ENCODE measurements at regions of chr5 and their contacts with region 1.

Region 1: DNA sequence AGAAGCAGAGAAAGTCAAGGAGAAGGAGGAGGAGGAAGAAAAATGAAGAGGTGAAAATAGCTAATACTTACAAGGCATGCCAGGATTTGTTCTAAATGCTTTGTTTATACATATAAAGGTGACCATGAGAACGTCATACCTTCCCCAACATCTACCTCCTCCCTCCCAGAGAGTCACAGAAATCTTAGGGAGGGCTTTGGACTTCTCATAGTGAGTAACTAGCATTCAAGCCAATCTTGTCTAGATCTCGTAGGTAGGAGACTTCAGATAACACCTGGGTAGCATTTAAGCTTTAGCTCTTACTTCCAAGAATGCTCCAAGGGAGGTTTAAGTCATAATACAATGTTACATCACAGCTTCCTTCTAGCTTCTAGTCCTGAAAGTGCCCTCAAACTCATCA is 36.5 kb upstream of the GPBP1 start:
- DNase-seq: no peak
- H3K4me3 ChIP-seq: no peak overlapping the region
- H3K27ac ChIP-seq: no peak overlapping the region
- H3K4me1 ChIP-seq: no peaks in the 10 kb centered on the region
- H3K27me3 ChIP-seq: no peaks in the 10 kb centered on the region
- CTCF ChIP-seq: no peak

Region 2: GRCh38 chr5:56900858-56901578 is 236.4 kb before region 1 on chr5:
- CTCF ChIA-PET with region 1: interaction called, 6 read pairs
- POLR2A ChIA-PET with region 1: no interaction called
- intact Hi-C with region 1: loop called (anchors 1 kb)
- DNase-seq: peak in 1 of 2 experiments; percentile 31
- H3K4me3 ChIP-seq: no peak overlapping the region
- H3K27ac ChIP-seq: no peak overlapping the region
- H3K4me1 ChIP-seq: 0 out of 2 replicates have a peak, but pooled peaks cover 4% of the 10 kb centered on the region
- H3K27me3 ChIP-seq: no peaks in the 10 kb centered on the region
- CTCF ChIP-seq: peak; percentile 79

Region 3: GRCh38 chr5:57221049-57221568 is 83.7 kb after region 1 on chr5:
- CTCF ChIA-PET with region 1: interaction called, 3 read pairs
- POLR2A ChIA-PET with region 1: no interaction called
- intact Hi-C with region 1: loop called (anchors 1 kb)
- DNase-seq: peak in 1 of 2 experiments; percentile 59
- H3K4me3 ChIP-seq: no peak overlapping the region
- H3K27ac ChIP-seq: peak overlapping the region; percentile 38; the same call in 1 of the 2 replicates
- H3K4me1 ChIP-seq: peaks cover 32% of the 10 kb centered on the region
- H3K27me3 ChIP-seq: no peaks in the 10 kb centered on the region
- CTCF ChIP-seq: peak; percentile 91

Region 4: GRCh38 chr5:57259704-57260103 is 122.3 kb after region 1 on chr5:
- CTCF ChIA-PET with region 1: no interaction called
- POLR2A ChIA-PET with region 1: no interaction called
- intact Hi-C with region 1: no loop called
- DNase-seq: no peak
- H3K4me3 ChIP-seq: no peak overlapping the region
- H3K27ac ChIP-seq: no peak overlapping the region
- H3K4me1 ChIP-seq: no peaks in the 10 kb centered on the region
- H3K27me3 ChIP-seq: no peaks in the 10 kb centered on the region
- CTCF ChIP-seq: no peak

Region 5: GRCh38 chr5:57416249-57416994 is 279.0 kb after region 1 on chr5:
- CTCF ChIA-PET with region 1: no interaction called
- POLR2A ChIA-PET with region 1: no interaction called
- intact Hi-C with region 1: no loop called
- DNase-seq: no peak
- H3K4me3 ChIP-seq: no peak overlapping the region
- H3K27ac ChIP-seq: no peak overlapping the region
- H3K4me1 ChIP-seq: no peaks in the 10 kb centered on the region
- H3K27me3 ChIP-seq: no peaks in the 10 kb centered on the region
- CTCF ChIP-seq: no peak